Astrocyte of the cerebellum (primary cell): ENCODE measurements at regions of chr20 and their contacts with region 1.

Region 1: GRCh38 chr20:21781446-21782075 is 76.1 kb downstream of the PAX1 start:
- DNase-seq: no peak
- H3K4me3 ChIP-seq: no peak overlapping the region
- CTCF ChIP-seq: no peak

Region 2: DNA sequence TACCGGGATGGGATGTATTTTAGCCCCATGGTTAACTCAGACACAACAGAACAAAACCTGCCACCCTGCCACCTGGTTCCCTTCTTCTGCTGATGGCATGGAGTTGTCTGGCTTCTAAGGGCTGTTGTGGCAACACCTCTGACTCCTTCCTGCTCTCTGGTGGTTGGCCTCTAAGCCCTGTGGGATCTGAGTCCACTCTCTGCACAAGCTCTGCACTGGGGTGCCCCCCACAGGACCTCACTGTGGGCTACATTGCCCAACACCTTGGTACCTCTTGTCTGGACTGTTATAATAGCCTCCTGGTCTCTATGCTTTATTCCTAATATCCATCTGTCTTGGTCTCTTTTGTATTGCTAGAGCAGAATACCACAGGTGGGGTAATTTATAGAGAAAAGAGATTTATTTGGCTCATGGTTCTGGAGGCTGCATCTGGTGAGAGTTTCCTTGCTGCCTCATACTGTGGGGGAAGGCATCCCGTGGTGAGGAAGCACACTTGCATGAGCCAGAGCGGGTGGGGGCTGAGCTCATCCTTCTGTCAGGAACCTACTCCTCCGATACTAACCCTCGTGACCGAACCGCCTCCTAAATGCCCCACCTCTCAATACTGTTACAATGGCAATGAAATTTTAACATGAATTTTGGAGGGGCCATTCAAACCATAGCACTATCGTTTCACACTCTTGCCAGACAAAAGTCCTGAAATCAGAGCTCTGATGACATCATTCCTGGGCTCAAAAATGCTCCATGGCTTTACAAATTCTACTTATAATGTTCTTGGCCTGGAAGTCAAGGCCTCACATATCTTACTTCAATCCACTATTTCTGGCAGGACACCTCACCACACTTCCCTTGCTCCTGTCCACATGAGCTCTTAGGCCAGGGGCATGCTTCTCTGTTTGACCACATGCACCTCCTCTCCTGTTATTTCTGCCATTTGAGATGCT is 51.2 kb after region 1 on chr20:
- in situ Hi-C with region 1: loop called (anchors 5 kb)
- DNase-seq: no peak
- H3K4me3 ChIP-seq: no peak overlapping the region
- CTCF ChIP-seq: no peak

Region 3: GRCh38 chr20:22098511-22098910 is 316.9 kb after region 1 on chr20:
- in situ Hi-C with region 1: no loop called
- DNase-seq: no peak
- H3K4me3 ChIP-seq: no peak overlapping the region
- CTCF ChIP-seq: no peak